ENCODE measurements at regions of chr9 and their contacts with region 1.

Region 1: GRCh38 chr9:15007698-15008097 is 97.5 kb upstream of the FREM1 start:
- DNase-seq: no peak
- ATAC-seq: no peak
- H3K4me3 ChIP-seq: no peak overlapping the region
- H3K27ac ChIP-seq: no peak overlapping the region
- H3K4me1 ChIP-seq: no peaks in the 10 kb centered on the region
- H3K27me3 ChIP-seq: peaks cover 34% of the 10 kb centered on the region; the same call in 1 of the 2 replicates
- CTCF ChIP-seq: no peak
- POLR2A ChIP-seq: no peak
- RAD21 ChIP-seq: no peak

Region 2: DNA sequence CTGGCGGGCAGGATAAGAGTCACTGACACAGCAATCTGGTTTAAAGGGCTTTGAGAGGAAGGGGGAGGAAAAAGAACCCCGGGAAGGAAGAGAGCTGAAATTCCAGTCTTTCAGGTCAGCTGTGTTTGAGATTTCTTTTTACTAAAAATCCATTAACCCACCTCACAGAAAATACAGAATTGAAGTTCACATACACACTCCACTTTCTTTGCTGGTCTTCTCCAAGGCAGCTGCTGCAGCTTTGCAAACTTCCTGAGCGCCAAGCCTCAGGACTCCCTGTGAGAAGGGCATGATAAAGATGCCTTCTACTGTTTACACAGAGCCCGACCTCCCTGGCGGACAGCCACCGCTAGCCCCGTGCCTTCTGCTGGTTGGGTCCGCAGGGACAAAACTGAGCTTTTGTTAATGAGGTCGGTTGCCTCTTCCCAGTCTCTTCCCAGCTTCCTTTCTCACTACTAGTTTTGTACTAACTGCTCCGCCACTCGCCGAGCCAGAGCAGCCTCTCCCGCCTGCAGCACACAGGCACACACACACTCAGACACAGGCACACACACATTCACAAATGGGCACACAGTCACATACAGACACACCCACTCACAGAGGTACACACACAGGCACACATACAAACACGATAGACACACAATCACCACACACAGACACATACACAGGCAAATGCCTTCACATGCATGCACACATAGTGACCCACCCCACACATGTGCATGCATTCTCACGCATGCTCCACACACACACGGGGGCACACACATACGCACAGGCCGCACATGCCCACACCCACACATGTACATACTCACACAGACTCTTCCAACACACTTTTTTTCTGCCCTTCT is 97.5 kb before region 1 on chr9 and contains the start of gene FREM1:
- CTCF ChIA-PET with region 1: no interaction called
- POLR2A ChIA-PET with region 1: no interaction called
- RAD21 ChIA-PET with region 1: no interaction called
- intact Hi-C with region 1: loop called (anchors 5 kb)
- DNase-seq: no peak
- ATAC-seq: no peak
- H3K4me3 ChIP-seq: no peak within 1 kb of the TSS
- H3K27ac ChIP-seq: no peak within 1 kb of the TSS
- H3K4me1 ChIP-seq: no peaks in the 10 kb centered on the region
- H3K27me3 ChIP-seq: peaks cover 29% of the 10 kb centered on the region
- CTCF ChIP-seq: no peak
- POLR2A ChIP-seq: no peak
- RAD21 ChIP-seq: no peak
- total RNA-seq, gene FREM1: 0.12 TPM

Region 3: DNA sequence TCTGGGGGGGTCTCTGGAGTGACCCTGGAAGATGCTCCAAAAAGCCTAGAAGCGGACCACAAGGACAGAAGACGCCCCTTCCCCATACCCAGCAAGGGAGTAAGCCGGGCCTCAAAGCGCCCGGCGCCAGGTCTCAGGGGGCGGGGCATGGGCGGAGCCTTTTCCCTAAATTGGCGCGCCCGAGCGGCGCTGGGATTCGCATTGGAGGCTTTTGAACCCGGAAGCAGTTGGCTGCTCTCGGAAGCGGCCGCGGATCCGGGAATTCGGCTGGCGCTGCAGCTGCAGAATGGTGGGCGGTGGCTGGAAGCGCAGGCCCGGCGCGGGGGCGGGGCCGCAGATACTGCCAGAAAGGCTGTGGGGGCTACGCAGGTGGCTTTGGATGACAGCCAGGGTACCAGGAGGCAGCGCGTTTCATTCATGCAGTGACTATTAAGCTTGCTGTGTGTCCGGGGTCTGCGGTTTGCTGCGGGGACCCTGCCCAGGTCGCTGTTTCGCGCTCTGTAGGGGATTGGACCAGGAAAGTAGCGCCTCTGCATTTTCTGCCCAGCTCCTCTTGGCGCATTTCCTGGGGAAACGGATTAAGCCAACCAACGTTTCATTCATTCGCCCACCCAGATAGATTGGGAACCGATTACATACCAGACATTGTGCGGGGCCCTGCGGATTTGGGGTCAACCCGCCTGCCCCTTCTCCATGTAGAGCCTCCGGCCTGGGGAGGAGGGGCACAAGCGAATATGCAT is 14.5 kb before region 1 on chr9:
- CTCF ChIA-PET with region 1: no interaction called
- POLR2A ChIA-PET with region 1: no interaction called
- RAD21 ChIA-PET with region 1: no interaction called
- intact Hi-C with region 1: no loop called
- DNase-seq: no peak
- ATAC-seq: no peak
- H3K4me3 ChIP-seq: no peak overlapping the region
- H3K27ac ChIP-seq: no peak overlapping the region
- H3K4me1 ChIP-seq: no peaks in the 10 kb centered on the region
- H3K27me3 ChIP-seq: peaks cover 9% of the 10 kb centered on the region; the same call in 1 of the 2 replicates
- CTCF ChIP-seq: no peak
- POLR2A ChIP-seq: no peak
- RAD21 ChIP-seq: no peak

Region 4: GRCh38 chr9:15068261-15068660 is 60.6 kb after region 1 on chr9:
- CTCF ChIA-PET with region 1: no interaction called
- POLR2A ChIA-PET with region 1: no interaction called
- RAD21 ChIA-PET with region 1: no interaction called
- intact Hi-C with region 1: loop called (anchors 10 kb)
- DNase-seq: no peak
- ATAC-seq: no peak
- H3K4me3 ChIP-seq: no peak overlapping the region
- H3K27ac ChIP-seq: no peak overlapping the region
- H3K4me1 ChIP-seq: no peaks in the 10 kb centered on the region
- H3K27me3 ChIP-seq: peaks cover 22% of the 10 kb centered on the region
- CTCF ChIP-seq: no peak
- POLR2A ChIP-seq: no peak
- RAD21 ChIP-seq: no peak

Region 5: GRCh38 chr9:15157371-15157770 is 149.7 kb after region 1 on chr9:
- CTCF ChIA-PET with region 1: no interaction called
- POLR2A ChIA-PET with region 1: no interaction called
- RAD21 ChIA-PET with region 1: no interaction called
- intact Hi-C with region 1: no loop called
- DNase-seq: no peak
- ATAC-seq: no peak
- H3K4me3 ChIP-seq: no peak overlapping the region
- H3K27ac ChIP-seq: no peak overlapping the region
- H3K4me1 ChIP-seq: no peaks in the 10 kb centered on the region
- H3K27me3 ChIP-seq: no peaks in the 10 kb centered on the region
- CTCF ChIP-seq: no peak
- POLR2A ChIP-seq: no peak
- RAD21 ChIP-seq: no peak